Astrocyte of the cerebellum (primary cell): ENCODE measurements at regions of chr20 and their contacts with region 1.

Region 1: DNA sequence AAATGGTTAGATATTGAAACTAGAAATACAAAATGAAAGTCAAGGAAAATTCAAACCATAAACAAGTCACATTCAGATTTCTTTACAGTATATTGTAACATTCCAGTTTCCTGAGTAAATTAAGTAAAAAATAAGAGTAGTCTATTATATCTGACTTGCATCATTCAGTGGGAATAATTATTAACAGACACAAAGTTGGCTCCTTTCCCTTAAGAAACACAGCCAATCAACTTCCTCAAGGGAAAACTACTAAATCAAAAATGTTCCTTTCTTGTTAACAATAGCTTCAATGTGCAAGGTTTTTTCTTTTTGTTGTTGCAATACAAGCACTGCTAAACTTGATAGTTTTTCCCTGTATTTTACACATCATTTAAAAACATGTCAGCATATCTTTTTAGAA is 33.2 kb downstream of the DNAAF9 start:
- DNase-seq: no peak
- H3K4me3 ChIP-seq: no peak overlapping the region
- CTCF ChIP-seq: no peak

Region 2: GRCh38 chr20:3296261-3297078 is 77.8 kb before region 1 on chr20:
- in situ Hi-C with region 1: loop called (anchors 5 kb)
- DNase-seq: no peak
- H3K4me3 ChIP-seq: no peak overlapping the region
- CTCF ChIP-seq: no peak

Region 3: DNA sequence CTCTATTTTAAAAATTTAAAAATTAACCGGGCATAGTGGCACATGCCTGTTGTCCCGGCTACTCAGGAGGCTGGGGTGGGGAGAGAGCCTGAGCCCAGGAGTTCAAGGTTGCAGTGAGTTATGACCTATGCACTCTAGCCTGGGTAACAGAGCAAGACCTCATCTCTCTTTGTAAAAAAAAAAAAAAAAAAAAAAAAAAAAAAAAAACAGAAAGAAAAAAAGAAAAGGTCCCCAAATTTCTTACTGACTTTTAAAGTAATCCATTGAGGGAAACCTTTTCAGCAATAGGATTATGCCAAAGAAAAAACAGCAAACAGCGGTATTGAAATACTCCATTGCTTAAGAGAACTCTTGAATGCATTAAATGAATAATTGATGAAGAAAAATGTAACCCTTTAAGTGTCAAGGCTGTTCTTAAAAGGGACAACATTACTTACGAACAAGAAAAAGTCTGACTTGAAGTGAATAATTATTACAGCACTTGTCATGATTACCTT is 39.1 kb after region 1 on chr20:
- in situ Hi-C with region 1: loop called (anchors 5 kb)
- DNase-seq: no peak
- H3K4me3 ChIP-seq: no peak overlapping the region
- CTCF ChIP-seq: no peak

Region 4: DNA sequence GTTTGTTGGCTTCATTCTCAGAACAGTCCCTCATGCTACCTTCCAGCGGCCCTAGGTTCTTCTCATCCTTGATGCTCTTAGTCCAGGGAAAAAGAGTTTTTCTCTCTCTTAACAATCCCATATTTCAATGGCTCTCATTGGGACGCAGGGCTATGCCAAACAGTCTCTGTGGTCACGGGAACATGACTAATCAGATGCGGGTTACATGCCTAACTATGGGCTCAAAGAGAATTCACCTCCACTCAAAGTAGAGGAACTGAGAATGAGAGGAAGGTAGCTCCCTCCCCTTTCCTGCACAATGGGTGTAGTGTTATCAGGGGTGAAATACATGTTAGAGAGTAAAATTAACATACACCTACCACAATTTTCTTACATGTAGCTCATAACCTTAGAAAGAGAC is 78.4 kb after region 1 on chr20:
- in situ Hi-C with region 1: loop called (anchors 5 kb)
- DNase-seq: no peak
- H3K4me3 ChIP-seq: no peak overlapping the region
- CTCF ChIP-seq: no peak

Region 5: GRCh38 chr20:3995067-3995748 is 620.9 kb after region 1 on chr20:
- in situ Hi-C with region 1: no loop called
- DNase-seq: no peak
- H3K4me3 ChIP-seq: no peak overlapping the region
- CTCF ChIP-seq: no peak